Mammary epithelial cell (primary cell): ENCODE measurements at regions of chr1 and their contacts with region 1.

Region 1: GRCh38 chr1:10851024-10852013 is 54.9 kb upstream of the CASZ1 start:
- DNase-seq: no peak
- H3K4me3 ChIP-seq: no peak overlapping the region
- H3K27ac ChIP-seq: no peak overlapping the region
- H3K4me1 ChIP-seq: no peaks in the 10 kb centered on the region
- H3K27me3 ChIP-seq: no peaks in the 10 kb centered on the region
- CTCF ChIP-seq: no peak

Region 2: GRCh38 chr1:10745886-10746455 is 105.3 kb before region 1 on chr1:
- CTCF ChIA-PET with region 1: no interaction called
- dilution Hi-C with region 1: loop called (anchors 5 kb)
- in situ Hi-C with region 1: no loop called
- intact Hi-C with region 1: no loop called
- DNase-seq: no peak
- H3K4me3 ChIP-seq: no peak overlapping the region
- H3K27ac ChIP-seq: no peak overlapping the region
- H3K4me1 ChIP-seq: no peaks in the 10 kb centered on the region
- H3K27me3 ChIP-seq: no peaks in the 10 kb centered on the region
- CTCF ChIP-seq: no peak